Heart left ventricle (tissue), 16 donors: ENCODE measurements at regions of chr1 and their contacts with region 1.

Region 1: DNA sequence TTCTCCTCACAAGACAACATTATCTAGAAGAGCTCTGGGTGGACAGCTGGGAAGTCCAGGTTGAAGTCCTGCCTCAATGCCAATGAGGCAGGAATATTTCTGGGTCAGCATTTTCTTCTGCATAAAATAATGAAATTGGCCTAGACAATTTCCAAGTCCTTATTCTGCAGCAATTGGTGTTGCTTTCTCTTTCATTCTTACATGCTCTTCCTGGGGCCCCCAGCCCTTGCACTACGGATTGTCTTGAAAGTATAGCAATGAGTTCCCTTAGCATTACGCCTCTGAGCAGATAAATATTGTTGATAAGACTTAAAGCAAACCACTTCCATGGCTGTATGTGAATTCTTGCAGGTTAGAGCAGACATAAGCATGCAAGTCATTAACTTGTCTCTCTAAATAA is 188.5 kb downstream of the TGFBR3 start:
- DNase-seq: no peak
- ATAC-seq: no peak
- H3K4me3 ChIP-seq: no peak overlapping the region
- H3K27ac ChIP-seq: peak overlapping the region in 6 of 12 donors; percentile 23 to 78 (median 34)
- H3K4me1 ChIP-seq: peaks cover 0 to 85% (median 49%) of the 10 kb centered on the region in 12 donors
- H3K27me3 ChIP-seq: no peaks in the 10 kb centered on the region
- CTCF ChIP-seq: no peak
- POLR2A ChIP-seq: no peak

Region 2: DNA sequence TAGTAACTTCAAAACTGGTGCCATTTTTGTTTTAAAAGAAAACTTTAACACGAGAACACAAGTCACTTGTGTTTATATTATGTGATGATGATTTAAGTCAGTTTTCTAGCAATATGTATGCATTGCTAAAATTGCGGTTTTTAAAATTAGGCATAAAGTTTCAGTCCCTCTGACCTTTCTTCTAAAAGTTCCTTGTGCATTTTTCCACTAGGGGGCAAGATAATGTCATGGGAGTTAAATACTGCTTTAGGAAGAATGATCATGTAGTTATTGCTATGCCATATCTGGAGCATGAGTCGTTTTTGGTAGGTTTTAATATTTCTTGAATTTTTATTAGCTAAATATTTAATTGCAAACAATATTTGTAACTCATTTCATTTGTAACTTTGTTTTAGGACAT is 186.0 kb before region 1 on chr1:
- intact Hi-C with region 1: loop called in 1 of 10 experiments (anchors 10 kb)
- DNase-seq: no peak
- ATAC-seq: peak in 1 of 4 donors; percentile 58
- H3K4me3 ChIP-seq: no peak overlapping the region
- H3K27ac ChIP-seq: no peak overlapping the region
- H3K4me1 ChIP-seq: no peaks in the 10 kb centered on the region
- H3K27me3 ChIP-seq: no peaks in the 10 kb centered on the region
- CTCF ChIP-seq: peak; percentile 53 to 78 (median 60)
- POLR2A ChIP-seq: no peak

Region 3: DNA sequence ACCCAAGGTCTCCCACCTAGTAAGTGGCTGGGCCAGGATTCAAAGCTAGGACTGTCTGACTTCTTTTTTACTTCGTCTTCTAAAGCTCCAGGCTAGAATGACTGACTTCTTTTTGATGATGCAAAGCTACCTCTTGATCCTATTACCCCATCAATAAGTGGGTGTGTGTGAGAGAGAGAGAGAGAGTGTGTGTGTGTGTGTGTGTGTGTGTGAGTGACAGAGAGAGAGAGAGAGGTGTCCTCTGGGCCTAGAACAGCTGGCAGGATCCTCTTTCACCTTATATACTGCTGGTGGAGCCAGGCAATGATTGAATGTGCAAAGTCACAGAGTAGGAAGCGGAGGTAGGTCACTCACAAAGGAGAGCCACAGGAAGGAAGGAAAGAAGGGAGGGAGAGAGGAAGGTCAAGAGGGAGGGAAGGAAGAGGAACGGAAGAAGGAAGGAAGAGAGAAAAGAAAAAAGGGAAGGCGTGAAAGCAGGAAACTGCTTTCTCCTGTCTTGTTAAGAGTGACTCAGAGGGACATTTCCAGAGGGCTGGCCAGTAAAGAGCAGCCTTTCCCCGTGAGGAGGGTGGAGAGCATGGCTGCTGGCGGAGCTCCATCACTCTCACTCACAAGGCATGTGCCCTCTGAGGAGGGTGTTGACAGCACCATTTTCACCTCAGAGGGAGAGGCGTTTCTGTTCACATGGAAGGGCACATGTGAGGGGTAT is 127.9 kb before region 1 on chr1:
- intact Hi-C with region 1: loop called in 1 of 10 experiments (anchors 10 kb)
- DNase-seq: peak; percentile 81 to 94 (median 85)
- ATAC-seq: peak; percentile 97 to 98 (median 98)
- H3K4me3 ChIP-seq: peak overlapping the region in 1 of 12 donors; percentile 4
- H3K27ac ChIP-seq: peak overlapping the region; percentile 20 to 91 (median 78)
- H3K4me1 ChIP-seq: peaks cover 0 to 46% (median 20%) of the 10 kb centered on the region in 12 donors
- H3K27me3 ChIP-seq: no peaks in the 10 kb centered on the region
- CTCF ChIP-seq: no peak
- POLR2A ChIP-seq: no peak

Region 4: DNA sequence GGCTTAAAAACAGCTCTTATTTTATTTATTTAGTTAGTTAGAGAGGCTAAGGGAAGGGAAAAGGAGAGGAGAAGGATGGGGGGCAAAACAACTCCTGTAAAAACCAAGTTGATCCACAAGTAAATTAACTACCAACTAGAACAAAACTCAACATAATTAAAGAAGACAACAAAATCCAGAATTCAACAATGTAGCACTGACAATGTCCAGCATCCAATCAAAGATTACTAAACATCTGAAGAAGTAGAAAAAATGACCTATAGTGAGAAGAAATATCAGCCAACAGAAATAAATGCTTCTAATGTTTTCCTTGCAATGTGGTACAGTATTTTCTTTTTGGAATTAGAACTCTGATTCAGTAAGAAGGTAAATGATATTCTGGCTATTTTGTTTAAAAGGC is 36.7 kb before region 1 on chr1:
- intact Hi-C with region 1: no loop called
- DNase-seq: no peak
- ATAC-seq: no peak
- H3K4me3 ChIP-seq: no peak overlapping the region
- H3K27ac ChIP-seq: no peak overlapping the region
- H3K4me1 ChIP-seq: no peaks in the 10 kb centered on the region
- H3K27me3 ChIP-seq: no peaks in the 10 kb centered on the region
- CTCF ChIP-seq: no peak
- POLR2A ChIP-seq: no peak

Region 5: DNA sequence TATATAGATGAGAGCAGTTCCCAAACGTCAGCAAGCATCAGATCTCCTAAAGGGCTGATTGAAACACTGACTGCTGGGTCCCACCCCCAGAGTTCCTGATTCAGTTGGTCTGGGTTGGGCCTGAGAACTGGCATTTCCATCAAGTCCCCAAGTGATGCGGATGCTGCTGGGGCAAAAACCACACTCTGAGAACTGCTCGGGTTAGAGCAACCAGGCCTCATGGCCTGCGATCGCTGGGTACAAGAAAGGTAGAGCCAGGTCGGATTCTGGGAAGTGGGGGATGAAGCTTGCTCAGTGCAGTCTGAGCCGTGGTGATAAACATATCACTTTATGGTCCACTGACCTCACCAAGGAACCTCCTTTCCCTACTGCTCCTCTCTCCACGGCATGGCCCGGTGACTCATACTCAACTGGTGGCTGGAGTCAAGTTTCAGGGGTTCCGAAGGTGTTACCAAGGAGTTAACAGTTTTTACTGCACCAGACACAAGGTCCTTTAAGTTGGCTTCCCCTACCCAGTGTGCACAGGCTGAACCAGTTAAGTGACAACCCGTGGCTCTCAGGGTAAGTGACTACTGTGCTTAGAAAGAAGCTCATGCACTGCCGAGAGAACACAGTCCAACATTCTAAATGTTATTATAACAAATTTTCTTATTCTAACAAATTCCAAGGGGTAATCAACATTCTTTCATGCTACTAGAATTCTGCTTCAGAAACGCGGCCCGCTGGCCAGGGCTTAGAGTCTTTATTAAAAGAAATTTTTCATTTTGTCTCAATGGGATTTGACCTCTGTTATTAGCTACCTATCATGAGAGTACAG is 35.1 kb after region 1 on chr1:
- intact Hi-C with region 1: loop called in 1 of 10 experiments (anchors 5 kb)
- DNase-seq: no peak
- ATAC-seq: peak in 2 of 4 donors; percentile 2 to 32
- H3K4me3 ChIP-seq: no peak overlapping the region
- H3K27ac ChIP-seq: peak overlapping the region in 5 of 12 donors; percentile 24 to 92 (median 42)
- H3K4me1 ChIP-seq: peaks cover 0 to 78% (median 44%) of the 10 kb centered on the region in 12 donors
- H3K27me3 ChIP-seq: no peaks in the 10 kb centered on the region
- CTCF ChIP-seq: no peak
- POLR2A ChIP-seq: no peak

Region 6: GRCh38 chr1:91754348-91754747 is 56.9 kb after region 1 on chr1:
- intact Hi-C with region 1: loop called in 2 of 10 experiments (anchors 5 to 10 kb)
- DNase-seq: no peak
- ATAC-seq: no peak
- H3K4me3 ChIP-seq: no peak overlapping the region
- H3K27ac ChIP-seq: peak overlapping the region in 10 of 12 donors; percentile 18 to 73 (median 58)
- H3K4me1 ChIP-seq: peaks cover 0 to 64% (median 31%) of the 10 kb centered on the region in 12 donors
- H3K27me3 ChIP-seq: no peaks in the 10 kb centered on the region
- CTCF ChIP-seq: no peak
- POLR2A ChIP-seq: no peak